ENCODE measurements at regions of chr3 and their contacts with region 1.

Region 1: GRCh38 chr3:37996785-37997301 is 6.3 kb downstream of the VILL start:
- DNase-seq: peak; percentile 82
- H3K4me3 ChIP-seq: no peak overlapping the region
- H3K27ac ChIP-seq: no peak overlapping the region
- H3K4me1 ChIP-seq: peaks cover 5 to 19% of the 10 kb centered on the region in 2 experiments; a peak in 3 of 4 replicates
- H3K27me3 ChIP-seq: no peaks in the 10 kb centered on the region
- CTCF ChIP-seq: peak; percentile 82
- EP300 ChIP-seq: no peak
- RAD21 ChIP-seq: peak; percentile 68

Region 2: DNA sequence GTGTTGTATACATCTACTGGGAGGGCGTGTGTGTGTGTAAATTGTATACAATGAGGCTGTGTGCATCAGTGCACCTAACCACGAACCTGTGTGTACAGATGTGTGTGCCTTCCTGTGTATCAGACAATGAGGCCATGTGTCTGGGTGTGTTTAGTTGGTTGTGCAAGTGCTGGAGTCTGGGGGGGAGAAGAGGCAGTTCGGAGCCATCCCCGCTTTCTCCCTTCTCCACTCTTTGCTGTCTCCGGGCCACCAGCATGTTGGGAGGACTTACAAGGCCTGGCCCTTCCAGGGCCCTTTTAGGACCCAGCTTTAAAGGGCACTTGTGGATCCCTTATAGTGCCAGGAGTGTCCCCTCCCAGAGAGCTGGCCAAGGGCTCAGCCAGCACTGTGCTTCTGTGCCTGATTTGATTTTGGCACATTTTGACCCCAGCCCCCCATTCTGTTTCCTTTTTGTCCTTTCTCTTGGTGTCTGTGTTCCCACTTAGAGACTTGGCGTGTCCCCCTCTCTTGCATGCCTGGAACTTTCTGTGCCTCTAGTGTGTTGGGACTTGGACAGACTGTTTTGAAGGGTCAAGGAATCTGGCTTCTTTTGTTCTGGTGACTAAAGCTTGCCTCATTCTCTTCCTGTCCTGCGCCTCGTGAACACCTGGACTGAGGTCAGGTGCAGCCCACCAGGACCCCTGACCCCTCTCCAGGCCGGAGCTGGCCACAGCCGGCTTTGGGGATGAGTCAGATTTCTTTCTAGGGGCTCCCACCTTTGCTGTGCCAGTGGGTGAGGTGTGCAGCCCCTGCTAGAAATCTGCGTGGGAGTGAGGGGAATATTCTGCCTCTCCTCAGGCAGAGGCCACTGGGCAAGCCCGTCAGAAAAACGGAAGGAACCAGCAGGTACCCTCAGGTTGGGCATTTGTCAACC is 133.7 kb before region 1 on chr3:
- CTCF ChIA-PET with region 1: interaction called, 11 read pairs
- POLR2A ChIA-PET with region 1: no interaction called
- DNase-seq: no peak
- H3K4me3 ChIP-seq: peak overlapping the region; percentile 70 to 80
- H3K27ac ChIP-seq: peak overlapping the region; percentile 9 to 78; a peak in 3 of 4 replicates
- H3K4me1 ChIP-seq: peaks cover 15 to 39% of the 10 kb centered on the region in 2 experiments
- H3K27me3 ChIP-seq: no peaks in the 10 kb centered on the region
- CTCF ChIP-seq: no peak
- EP300 ChIP-seq: no peak
- RAD21 ChIP-seq: no peak

Region 3: DNA sequence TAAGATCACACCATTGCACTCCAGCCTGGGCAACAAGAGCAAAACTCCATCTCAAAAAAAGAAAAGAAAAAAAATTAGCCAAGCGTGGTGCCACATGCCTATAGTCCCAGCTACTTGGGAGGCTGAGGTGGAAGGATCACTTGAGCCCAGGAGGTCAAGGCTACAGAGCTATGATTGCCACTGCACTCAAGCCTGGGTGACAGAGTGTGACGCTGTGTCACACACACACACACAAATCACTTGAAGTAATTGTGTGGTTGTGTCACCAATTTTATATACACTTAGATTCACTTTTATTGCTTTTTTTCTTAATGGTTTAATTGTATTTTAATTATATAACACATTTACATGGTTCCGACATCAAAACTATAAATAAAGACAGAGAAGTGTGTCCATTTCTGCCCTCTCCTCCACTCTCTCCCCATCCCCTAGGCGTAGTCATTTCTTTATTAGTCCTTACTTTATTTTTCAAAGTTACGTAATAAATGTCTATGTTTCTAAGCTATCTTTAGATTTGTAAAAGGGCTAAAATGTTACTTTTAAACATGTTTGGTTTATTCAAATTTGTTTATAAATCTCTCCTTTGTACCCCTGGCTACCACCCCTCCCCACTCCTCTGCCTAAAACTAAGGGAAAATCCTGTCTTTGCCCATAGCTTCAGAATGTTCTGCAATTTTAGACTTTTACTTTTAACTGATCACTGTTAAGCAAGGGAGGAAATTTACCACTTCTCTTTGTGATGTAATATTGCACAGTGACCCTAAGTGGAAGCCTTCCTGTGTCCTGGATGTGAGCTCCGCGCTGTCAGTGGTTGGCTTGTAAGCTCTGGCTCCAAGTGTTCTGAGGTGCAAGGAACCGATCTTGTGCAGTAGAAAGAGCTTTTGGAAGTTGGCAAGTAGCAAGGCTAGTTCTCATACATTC is 17.0 kb before region 1 on chr3:
- CTCF ChIA-PET with region 1: interaction called, 14 read pairs
- POLR2A ChIA-PET with region 1: no interaction called
- DNase-seq: no peak
- H3K4me3 ChIP-seq: no peak overlapping the region
- H3K27ac ChIP-seq: no peak overlapping the region
- H3K4me1 ChIP-seq: no peaks in the 10 kb centered on the region; a peak in 1 of 4 replicates
- H3K27me3 ChIP-seq: no peaks in the 10 kb centered on the region
- CTCF ChIP-seq: no peak
- EP300 ChIP-seq: no peak
- RAD21 ChIP-seq: no peak

Region 4: DNA sequence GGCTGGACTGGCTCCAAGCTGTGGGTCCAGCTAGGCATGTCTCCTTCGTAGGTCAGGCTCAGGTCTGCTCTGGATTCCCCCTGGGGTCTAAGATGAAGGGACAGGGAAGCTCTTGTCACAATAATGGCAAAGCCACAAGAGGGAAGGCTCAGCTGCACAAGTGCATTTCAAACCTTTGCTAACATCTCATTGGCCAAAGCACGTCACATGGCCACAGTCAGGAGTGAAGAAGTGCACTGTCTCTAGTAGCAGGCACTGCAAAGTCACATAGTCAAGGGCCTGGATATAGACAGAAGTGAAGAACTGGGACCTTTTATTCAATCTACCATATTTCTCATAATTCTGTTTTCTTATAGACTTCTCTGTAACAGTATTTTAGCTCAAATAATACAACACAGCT is 62.3 kb after region 1 on chr3:
- CTCF ChIA-PET with region 1: no interaction called
- POLR2A ChIA-PET with region 1: no interaction called
- DNase-seq: no peak
- H3K4me3 ChIP-seq: no peak overlapping the region
- H3K27ac ChIP-seq: no peak overlapping the region
- H3K4me1 ChIP-seq: no peaks in the 10 kb centered on the region
- H3K27me3 ChIP-seq: peaks cover 8% of the 10 kb centered on the region; the same call in 1 of the 2 replicates
- CTCF ChIP-seq: no peak
- EP300 ChIP-seq: no peak
- RAD21 ChIP-seq: no peak